PC-9 (cell line): ENCODE measurements at regions of chr3 and their contacts with region 1.

Region 1: GRCh38 chr3:155701882-155702465 is 42.9 kb downstream of the PLCH1 start:
- DNase-seq: peak in 1 of 2 experiments; percentile 63
- H3K4me3 ChIP-seq: no peak overlapping the region
- H3K27ac ChIP-seq: no peak overlapping the region
- H3K4me1 ChIP-seq: no peaks in the 10 kb centered on the region
- H3K27me3 ChIP-seq: no peaks in the 10 kb centered on the region
- CTCF ChIP-seq: peak; percentile 94

Region 2: GRCh38 chr3:154758109-154758868 is 943.7 kb before region 1 on chr3:
- CTCF ChIA-PET with region 1: no interaction called
- POLR2A ChIA-PET with region 1: no interaction called
- intact Hi-C with region 1: loop called (anchors 2 kb)
- DNase-seq: no peak
- H3K4me3 ChIP-seq: no peak overlapping the region
- H3K27ac ChIP-seq: no peak overlapping the region
- H3K4me1 ChIP-seq: no peaks in the 10 kb centered on the region
- H3K27me3 ChIP-seq: no peaks in the 10 kb centered on the region
- CTCF ChIP-seq: peak; percentile 67

Region 3: GRCh38 chr3:155352900-155353490 is 349.0 kb before region 1 on chr3:
- CTCF ChIA-PET with region 1: interaction called, 8 read pairs
- POLR2A ChIA-PET with region 1: no interaction called
- intact Hi-C with region 1: loop called (anchors 1 kb)
- DNase-seq: peak in 1 of 2 experiments; percentile 55
- H3K4me3 ChIP-seq: no peak overlapping the region
- H3K27ac ChIP-seq: no peak overlapping the region
- H3K4me1 ChIP-seq: no peaks in the 10 kb centered on the region
- H3K27me3 ChIP-seq: no peaks in the 10 kb centered on the region
- CTCF ChIP-seq: peak; percentile 84

Region 4: DNA sequence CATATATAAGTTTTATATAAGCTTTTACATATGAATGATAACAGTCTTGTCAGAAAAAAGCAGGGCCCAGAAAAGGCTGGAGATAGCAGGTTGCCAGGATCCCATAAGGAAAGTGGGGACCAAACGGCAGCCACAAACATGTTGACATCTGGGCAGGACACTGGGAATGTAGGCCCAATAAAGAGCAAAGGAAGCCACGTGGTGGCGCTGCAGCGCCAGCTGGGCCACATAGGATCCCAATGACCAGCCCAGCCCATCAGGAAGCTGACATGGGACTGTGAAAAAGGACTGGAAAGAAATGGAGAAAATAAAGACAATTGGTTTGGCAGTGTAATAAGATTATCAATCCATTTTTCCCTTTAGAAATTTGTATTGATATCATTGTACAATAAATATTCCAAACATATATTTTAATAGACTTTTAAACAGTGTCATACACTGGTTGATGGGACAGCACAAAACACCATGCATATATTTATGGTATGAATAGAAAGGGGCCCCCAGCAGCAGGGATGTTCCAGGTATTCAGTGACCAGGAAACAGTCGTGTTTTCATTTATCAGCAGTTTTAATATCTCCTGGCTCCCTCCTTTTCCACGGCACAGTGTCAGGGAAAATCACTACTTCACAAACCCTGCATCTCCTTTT is 319.5 kb before region 1 on chr3:
- CTCF ChIA-PET with region 1: interaction called, 33 read pairs
- POLR2A ChIA-PET with region 1: no interaction called
- intact Hi-C with region 1: loop called (anchors 1 kb)
- DNase-seq: peak; percentile 43 to 64
- H3K4me3 ChIP-seq: no peak overlapping the region
- H3K27ac ChIP-seq: no peak overlapping the region
- H3K4me1 ChIP-seq: no peaks in the 10 kb centered on the region
- H3K27me3 ChIP-seq: no peaks in the 10 kb centered on the region
- CTCF ChIP-seq: peak; percentile 91

Region 5: GRCh38 chr3:155741598-155741997 is 39.6 kb after region 1 on chr3:
- CTCF ChIA-PET with region 1: no interaction called
- POLR2A ChIA-PET with region 1: no interaction called
- intact Hi-C with region 1: no loop called
- DNase-seq: peak in 1 of 2 experiments; percentile 71
- H3K4me3 ChIP-seq: no peak overlapping the region
- H3K27ac ChIP-seq: no peak overlapping the region
- H3K4me1 ChIP-seq: 0 out of 2 replicates have a peak, but pooled peaks cover 10% of the 10 kb centered on the region
- H3K27me3 ChIP-seq: no peaks in the 10 kb centered on the region
- CTCF ChIP-seq: no peak

Region 6: DNA sequence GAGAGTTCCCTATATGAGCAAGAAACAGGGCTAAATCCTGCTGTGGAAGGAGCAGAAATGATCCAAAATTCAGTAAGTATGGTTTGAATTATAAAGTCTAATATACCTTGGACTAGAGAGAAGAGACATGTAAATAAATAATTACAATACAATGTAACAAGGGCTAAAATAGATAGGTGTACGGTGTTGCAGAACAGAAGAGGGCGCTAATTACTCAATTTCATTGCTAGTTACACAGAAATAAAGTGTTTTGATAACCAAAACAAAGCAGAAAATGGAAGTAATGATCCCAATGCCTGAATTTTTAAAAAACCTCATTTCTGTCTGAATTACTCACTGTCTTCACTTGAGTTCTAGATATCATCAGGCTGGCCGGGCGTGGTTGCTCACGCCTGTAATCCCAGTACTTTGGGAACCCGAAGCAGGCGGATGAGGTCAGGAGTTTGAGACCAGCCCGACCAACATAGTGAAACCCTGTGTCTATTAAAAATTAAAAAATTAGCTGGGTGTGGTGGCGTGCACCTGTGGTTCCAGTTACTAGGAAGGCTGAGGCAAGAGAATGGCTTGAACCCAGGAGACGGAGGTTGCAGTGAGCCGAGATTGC is 51.2 kb after region 1 on chr3:
- CTCF ChIA-PET with region 1: no interaction called
- POLR2A ChIA-PET with region 1: no interaction called
- intact Hi-C with region 1: no loop called
- DNase-seq: no peak
- H3K4me3 ChIP-seq: no peak overlapping the region
- H3K27ac ChIP-seq: no peak overlapping the region
- H3K4me1 ChIP-seq: peaks cover 14% of the 10 kb centered on the region
- H3K27me3 ChIP-seq: no peaks in the 10 kb centered on the region
- CTCF ChIP-seq: peak; percentile 76